HEK293 (cell line): ENCODE measurements at regions of chr19 and their contacts with region 1.

Region 1: GRCh38 chr19:36573020-36573885 is at the start of gene ZNF529:
- H3K4me3 ChIP-seq: peak within 1 kb of the TSS; percentile 70
- H3K27ac ChIP-seq: peak within 1 kb of the TSS; percentile 86
- H3K4me1 ChIP-seq: peaks cover 18% of the 10 kb centered on the region
- CTCF ChIP-seq: peak; percentile 89

Region 2: DNA sequence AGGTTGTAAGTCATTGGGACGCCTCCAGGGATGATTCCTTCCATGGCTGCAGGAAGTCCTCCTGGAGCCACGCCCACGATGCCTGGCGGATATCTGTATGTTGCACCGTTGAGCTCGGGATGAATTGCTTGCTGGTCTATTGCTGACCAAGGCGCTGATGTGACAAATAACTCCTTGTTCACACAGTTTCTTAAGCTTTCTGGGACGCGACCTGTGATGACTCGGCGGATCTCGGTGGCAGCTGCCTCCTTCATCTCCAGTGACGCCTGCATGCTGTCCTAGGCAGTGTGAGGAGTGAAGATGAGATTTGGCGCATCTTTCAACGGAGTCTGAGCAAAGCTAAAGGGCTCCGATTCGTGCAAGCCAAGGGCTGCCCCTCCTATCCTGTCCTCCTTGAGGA is 76.3 kb before region 1 on chr19:
- CTCF ChIA-PET with region 1: no interaction called
- POLR2A ChIA-PET with region 1: no interaction called
- H3K4me3 ChIP-seq: no peak overlapping the region
- H3K27ac ChIP-seq: no peak overlapping the region
- H3K4me1 ChIP-seq: no peaks in the 10 kb centered on the region
- CTCF ChIP-seq: no peak

Region 3: DNA sequence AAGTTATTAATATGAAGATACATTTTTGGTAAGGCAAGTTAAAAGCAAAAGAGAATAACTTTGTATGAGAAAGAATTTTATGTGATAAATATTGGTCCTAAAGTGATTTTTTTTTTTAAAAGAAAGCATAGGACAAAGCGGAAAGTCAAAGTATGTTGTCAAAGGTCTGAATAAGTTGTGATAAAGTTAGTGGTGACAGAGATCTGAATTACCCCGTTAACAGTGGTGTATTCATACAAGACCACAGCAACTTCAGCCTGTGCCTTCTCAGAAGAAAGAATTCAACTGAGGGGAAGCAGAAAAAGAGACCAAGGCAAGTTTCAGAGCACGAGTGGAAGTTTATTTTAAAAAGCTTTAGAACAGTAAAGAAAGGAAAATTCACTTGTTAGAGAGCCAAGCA is 64.9 kb before region 1 on chr19:
- CTCF ChIA-PET with region 1: no interaction called
- POLR2A ChIA-PET with region 1: no interaction called
- H3K4me3 ChIP-seq: no peak overlapping the region
- H3K27ac ChIP-seq: no peak overlapping the region
- H3K4me1 ChIP-seq: no peaks in the 10 kb centered on the region
- CTCF ChIP-seq: no peak

Region 4: DNA sequence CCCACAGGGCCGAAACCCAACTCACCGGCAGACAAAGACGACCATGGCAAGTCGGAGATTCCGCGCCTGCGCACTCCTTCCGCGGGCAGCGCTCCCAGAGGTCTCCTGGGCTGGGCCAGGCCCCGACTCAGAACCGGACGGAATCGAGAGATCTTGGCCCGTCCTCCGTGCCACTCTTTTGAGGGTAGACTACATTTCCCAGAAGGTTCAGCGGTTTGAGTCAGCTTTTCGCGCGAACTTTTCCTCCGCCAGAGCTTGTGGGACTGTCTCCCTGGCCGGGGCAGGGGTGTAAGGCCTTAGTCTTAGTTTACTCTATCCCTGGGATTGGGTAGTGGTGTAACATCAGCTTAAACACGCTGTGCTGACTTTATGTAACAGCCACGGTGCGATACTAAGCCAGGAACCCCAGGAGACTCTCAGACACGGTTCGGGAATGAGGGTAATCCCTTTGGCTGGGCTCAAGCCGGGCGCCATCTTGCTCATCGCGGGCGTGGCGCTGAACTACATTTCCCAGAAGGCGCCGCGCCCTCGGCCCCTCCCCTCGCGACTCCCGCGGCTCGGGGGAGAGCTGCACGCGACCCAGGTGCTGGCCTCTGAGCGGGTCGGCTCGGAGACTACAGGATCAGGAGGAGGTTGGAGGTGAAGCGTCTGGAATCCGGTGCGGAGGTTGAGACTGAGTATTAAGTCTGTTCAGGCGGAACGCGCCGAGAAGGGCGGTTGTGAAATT is 44.9 kb before region 1 on chr19 and contains the start of gene ZNF260:
- CTCF ChIA-PET with region 1: no interaction called
- POLR2A ChIA-PET with region 1: interaction called, 65 read pairs
- H3K4me3 ChIP-seq: peak within 1 kb of the TSS; percentile 91
- H3K27ac ChIP-seq: peak within 1 kb of the TSS; percentile 96
- H3K4me1 ChIP-seq: peaks cover 8% of the 10 kb centered on the region; the same call in 1 of the 2 replicates
- CTCF ChIP-seq: peak; percentile 45; the same call in 1 of the 2 replicates

Region 5: DNA sequence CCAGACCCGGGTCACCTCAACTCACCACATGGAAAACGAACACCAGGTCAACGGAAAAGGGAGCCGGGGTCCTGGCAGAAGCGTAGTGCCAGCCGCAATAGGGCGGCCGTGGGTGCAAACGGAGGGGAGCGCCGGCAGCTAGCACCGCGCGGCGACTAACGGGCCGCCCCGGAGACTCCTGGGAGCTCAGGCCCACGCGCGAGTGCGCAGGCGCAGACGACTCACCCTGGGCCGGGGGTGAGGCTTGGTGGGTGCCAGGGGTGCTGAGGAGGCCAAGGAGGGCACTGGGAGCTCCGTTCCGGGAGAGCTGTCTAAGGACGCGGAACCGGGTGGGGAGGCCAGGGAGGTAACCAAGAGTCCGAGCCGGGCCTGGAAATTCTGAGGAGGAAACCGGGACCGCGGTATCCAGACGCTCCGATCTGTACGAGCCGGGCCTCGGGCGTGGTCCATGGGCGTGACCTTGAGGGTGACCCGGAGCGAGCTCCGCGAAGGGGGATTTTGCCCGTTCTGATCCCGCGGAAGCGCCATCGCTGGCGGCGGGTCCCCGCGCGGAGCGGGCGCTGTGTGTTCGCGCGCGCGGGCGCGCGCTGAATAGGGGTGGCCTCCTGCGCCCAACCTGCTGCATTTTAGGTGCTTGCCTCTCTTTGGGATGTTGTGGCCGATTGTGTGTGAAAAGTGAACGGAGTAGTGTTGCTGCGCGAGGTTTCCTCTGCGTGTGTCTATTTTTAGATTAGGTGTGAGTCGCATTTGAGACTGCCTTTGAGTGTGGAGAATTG is 32.0 kb after region 1 on chr19 and contains the start of gene ZNF382:
- CTCF ChIA-PET with region 1: no interaction called
- POLR2A ChIA-PET with region 1: interaction called, 45 read pairs
- H3K4me3 ChIP-seq: peak within 1 kb of the TSS; percentile 57
- H3K27ac ChIP-seq: peak within 1 kb of the TSS; percentile 98
- H3K4me1 ChIP-seq: peaks cover 6% of the 10 kb centered on the region
- CTCF ChIP-seq: no peak; the same call in none of the 2 replicates

Region 6: DNA sequence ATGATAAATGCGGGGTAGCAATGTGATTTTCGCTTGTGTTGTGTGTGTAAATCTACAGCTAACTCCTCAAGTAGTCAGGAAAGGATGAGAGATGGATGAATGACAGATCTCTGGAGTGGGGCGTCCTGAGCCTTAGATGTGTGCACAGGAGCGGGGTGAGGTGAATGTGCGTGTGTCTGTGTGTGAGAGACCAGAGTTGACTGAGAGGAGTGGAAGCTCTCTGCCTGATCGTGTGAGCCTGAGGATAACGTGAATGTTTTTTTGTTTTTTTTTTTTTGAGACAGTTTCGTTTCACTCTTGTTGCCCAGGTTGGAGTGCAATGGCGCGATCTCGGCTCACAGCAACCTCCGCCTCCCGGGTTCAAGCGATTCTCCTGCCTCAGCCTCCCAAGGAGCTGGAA is 92.6 kb after region 1 on chr19:
- CTCF ChIA-PET with region 1: no interaction called
- POLR2A ChIA-PET with region 1: interaction called, 11 read pairs
- H3K4me3 ChIP-seq: peak overlapping the region; percentile 55
- H3K27ac ChIP-seq: peak overlapping the region; percentile 79; the same call in 1 of the 2 replicates
- H3K4me1 ChIP-seq: peaks cover 3% of the 10 kb centered on the region; the same call in 1 of the 2 replicates
- CTCF ChIP-seq: no peak

Region 7: GRCh38 chr19:36687214-36688056 is 114.2 kb after region 1 on chr19 and contains the start of gene ZNF567:
- CTCF ChIA-PET with region 1: no interaction called
- POLR2A ChIA-PET with region 1: interaction called, 12 read pairs
- H3K4me3 ChIP-seq: peak within 1 kb of the TSS; percentile 61
- H3K27ac ChIP-seq: peak within 1 kb of the TSS; percentile 87
- H3K4me1 ChIP-seq: peaks cover 10% of the 10 kb centered on the region; the same call in 1 of the 2 replicates
- CTCF ChIP-seq: peak; percentile 68